Activated T-helper 2 cell treated with anti-CD3 and anti-CD28 coated beads, Interferon-gamma antibody, Interleukin-2, Interleukin-4, amounts not matched to agents 10 μg/mL and 5 μg/mL and 100 μg/mL, durations not matched to agents 14 hours and 24 hours and 36 hours (primary cell): ENCODE measurements at regions of chr2 and their contacts with region 1.

Region 1: DNA sequence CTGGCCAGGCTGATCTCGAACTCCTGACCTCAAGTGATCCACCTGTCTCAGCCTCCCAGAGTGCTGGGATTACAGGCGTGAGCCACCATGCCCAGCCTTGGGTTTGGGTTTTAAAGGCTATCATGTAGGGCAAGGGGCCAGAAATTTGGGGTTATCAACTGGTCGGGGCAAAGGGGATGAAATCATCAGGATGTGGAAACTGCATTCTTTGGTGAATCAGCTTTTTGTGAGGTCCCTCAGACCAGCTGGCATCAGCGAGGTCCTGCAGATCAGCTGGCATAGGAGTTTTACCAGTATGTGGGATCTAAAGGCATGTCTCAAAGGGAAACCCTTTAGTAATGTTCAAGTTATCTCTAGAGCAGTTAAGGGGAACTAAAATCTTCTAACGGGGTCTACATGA is 6.4 kb upstream of the GEMIN6 start:
- DNase-seq: no peak
- H3K4me3 Mint-ChIP-seq: no peak overlapping the region
- H3K27ac Mint-ChIP-seq: no peak overlapping the region
- H3K4me1 Mint-ChIP-seq: no peaks in the 10 kb centered on the region
- H3K27me3 Mint-ChIP-seq: peaks cover 18% of the 10 kb centered on the region

Region 2: GRCh38 chr2:38720613-38721241 is 50.9 kb before region 1 on chr2:
- intact Hi-C with region 1: no loop called
- DNase-seq: no peak
- H3K4me3 Mint-ChIP-seq: no peak overlapping the region
- H3K27ac Mint-ChIP-seq: peak overlapping the region; percentile 38
- H3K4me1 Mint-ChIP-seq: peaks cover 50% of the 10 kb centered on the region
- H3K27me3 Mint-ChIP-seq: no peaks in the 10 kb centered on the region

Region 3: GRCh38 chr2:38856165-38856564 is 84.5 kb after region 1 on chr2:
- intact Hi-C with region 1: no loop called
- DNase-seq: no peak
- H3K4me3 Mint-ChIP-seq: no peak overlapping the region
- H3K27ac Mint-ChIP-seq: no peak overlapping the region
- H3K4me1 Mint-ChIP-seq: no peaks in the 10 kb centered on the region
- H3K27me3 Mint-ChIP-seq: no peaks in the 10 kb centered on the region

Region 4: DNA sequence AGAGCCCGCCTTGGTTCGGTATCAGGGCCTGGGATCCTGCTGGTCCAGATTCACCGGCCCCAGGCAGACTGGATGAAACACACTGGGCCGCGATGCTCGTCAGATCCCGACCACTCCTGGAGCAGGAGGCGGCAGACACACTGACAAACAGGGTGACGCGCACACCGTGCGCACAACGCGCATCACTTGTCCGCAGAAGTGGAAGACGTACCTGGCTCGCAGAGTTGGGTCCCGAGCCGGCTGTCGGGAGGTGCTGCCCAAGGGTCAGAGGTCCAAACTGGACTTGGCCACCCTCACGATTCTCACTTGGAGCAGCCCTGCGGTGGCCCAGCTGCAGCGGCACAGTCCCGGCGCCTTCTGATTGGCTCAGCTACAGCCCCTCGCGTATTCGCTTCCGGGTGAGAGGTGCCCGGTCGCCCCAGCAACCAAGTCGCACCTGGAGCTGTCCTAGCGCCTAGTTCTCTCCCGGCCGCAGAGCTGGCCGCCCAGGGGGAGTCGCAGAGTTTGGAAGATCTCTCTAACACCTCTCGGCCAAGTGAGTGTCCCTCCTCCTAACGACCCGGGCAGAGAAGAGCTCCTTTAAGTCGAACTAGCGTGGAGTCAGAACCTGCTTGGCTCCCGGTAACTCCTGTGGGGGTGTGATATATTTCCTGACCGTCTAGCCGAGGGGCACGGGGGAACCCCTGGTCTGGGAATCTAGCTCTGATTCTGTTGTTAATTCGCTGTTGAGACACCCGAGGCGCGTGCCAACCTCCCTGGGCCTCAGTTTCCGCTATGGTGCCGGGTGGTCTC is 104.1 kb after region 1 on chr2 and contains the starts of genes DHX57 and MORN2:
- intact Hi-C with region 1: loop called (anchors 10 kb)
- DNase-seq: peak; percentile 79
- H3K4me3 Mint-ChIP-seq: peak within 1 kb of the TSS; percentile 99
- H3K27ac Mint-ChIP-seq: peak within 1 kb of the TSS; percentile 95
- H3K4me1 Mint-ChIP-seq: peaks cover 17% of the 10 kb centered on the region
- H3K27me3 Mint-ChIP-seq: no peaks in the 10 kb centered on the region
- total RNA-seq, gene DHX57: 18.5 and 21.7 TPM in 2 replicates
- total RNA-seq, gene MORN2: 4.1 and 4.7 TPM in 2 replicates

Region 5: DNA sequence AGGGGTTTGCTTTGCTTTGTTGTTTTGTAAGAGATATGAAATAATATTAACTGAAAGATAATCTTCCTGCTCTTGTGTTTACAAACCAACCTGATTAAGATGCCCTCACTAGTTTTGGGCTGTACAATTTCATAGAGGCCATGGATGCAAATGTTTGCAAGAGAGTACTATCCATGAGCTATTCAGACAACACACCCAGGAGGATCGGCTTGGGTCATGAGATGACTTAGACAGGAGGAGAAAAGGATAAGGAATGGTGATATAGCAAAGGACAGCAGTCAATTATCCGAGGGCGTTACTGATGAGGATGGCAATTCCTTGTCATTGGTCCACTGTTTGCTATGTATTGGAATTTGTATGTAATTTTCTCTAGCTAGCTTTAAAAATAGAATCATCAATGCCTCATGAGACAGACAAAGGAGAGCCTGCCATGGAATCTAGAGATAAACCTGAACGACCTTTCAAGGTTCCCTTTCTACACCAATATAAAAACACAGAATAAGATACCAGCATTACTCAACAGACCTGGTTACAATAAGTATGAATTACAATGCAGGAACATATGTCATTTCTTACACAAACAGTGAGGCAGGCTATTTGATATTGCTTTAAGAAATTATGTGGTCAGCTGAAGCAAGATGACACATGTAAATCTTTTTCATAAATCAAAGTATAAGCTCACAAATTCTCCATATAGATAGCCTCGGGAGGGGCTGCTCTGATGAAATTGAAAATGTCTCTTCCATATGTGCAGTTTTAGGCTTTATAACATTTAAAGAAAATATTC is 403.6 kb after region 1 on chr2:
- intact Hi-C with region 1: no loop called
- DNase-seq: no peak
- H3K4me3 Mint-ChIP-seq: no peak overlapping the region
- H3K27ac Mint-ChIP-seq: no peak overlapping the region
- H3K4me1 Mint-ChIP-seq: peaks cover 9% of the 10 kb centered on the region
- H3K27me3 Mint-ChIP-seq: peaks cover 4% of the 10 kb centered on the region